ENCODE measurements at regions of chr7 and their contacts with region 1.

Region 1: GRCh38 chr7:117819558-117819957 is 53.7 kb downstream of the CTTNBP2 start:
- DNase-seq: no peak
- ATAC-seq: no peak
- H3K4me3 ChIP-seq: no peak overlapping the region
- H3K4me3 Mint-ChIP-seq: no peak overlapping the region
- H3K27ac ChIP-seq: no peak overlapping the region
- H3K27ac Mint-ChIP-seq: no peak overlapping the region
- H3K4me1 ChIP-seq: no peaks in the 10 kb centered on the region
- H3K4me1 Mint-ChIP-seq: no peaks in the 10 kb centered on the region
- H3K27me3 ChIP-seq: no peaks in the 10 kb centered on the region
- H3K27me3 Mint-ChIP-seq: no peaks in the 10 kb centered on the region

Region 2: DNA sequence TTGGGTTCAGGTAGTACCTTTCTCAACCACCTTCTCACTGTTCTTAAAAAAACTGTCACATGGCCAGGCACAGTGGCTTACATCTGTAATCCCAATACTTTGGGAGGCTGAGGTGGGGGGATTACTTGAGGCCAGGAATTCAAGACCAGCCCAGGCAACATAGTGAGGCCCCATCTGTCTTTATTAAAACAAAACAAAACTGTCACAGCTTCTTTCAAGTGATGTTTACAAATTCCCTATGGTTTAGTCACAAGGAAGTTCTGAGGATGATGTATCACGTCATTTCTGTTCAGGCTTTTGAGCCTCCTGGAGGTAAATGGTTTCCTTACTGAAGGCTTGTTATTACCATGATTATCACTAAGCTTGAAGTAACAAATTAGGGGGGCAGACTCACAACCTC is 153.5 kb before region 1 on chr7:
- CTCF ChIA-PET with region 1: no interaction called
- POLR2A ChIA-PET with region 1: no interaction called
- DNase-seq: no peak
- ATAC-seq: no peak
- H3K4me3 ChIP-seq: no peak overlapping the region
- H3K4me3 Mint-ChIP-seq: no peak overlapping the region
- H3K27ac ChIP-seq: no peak overlapping the region
- H3K27ac Mint-ChIP-seq: no peak overlapping the region
- H3K4me1 ChIP-seq: no peaks in the 10 kb centered on the region
- H3K4me1 Mint-ChIP-seq: no peaks in the 10 kb centered on the region
- H3K27me3 ChIP-seq: no peaks in the 10 kb centered on the region
- H3K27me3 Mint-ChIP-seq: no peaks in the 10 kb centered on the region

Region 3: GRCh38 chr7:117682681-117683385 is 136.7 kb before region 1 on chr7:
- CTCF ChIA-PET with region 1: no interaction called
- POLR2A ChIA-PET with region 1: no interaction called
- DNase-seq: no peak
- ATAC-seq: no peak
- H3K4me3 ChIP-seq: no peak overlapping the region
- H3K4me3 Mint-ChIP-seq: no peak overlapping the region
- H3K27ac ChIP-seq: no peak overlapping the region
- H3K27ac Mint-ChIP-seq: no peak overlapping the region
- H3K4me1 ChIP-seq: no peaks in the 10 kb centered on the region
- H3K4me1 Mint-ChIP-seq: no peaks in the 10 kb centered on the region
- H3K27me3 ChIP-seq: no peaks in the 10 kb centered on the region
- H3K27me3 Mint-ChIP-seq: no peaks in the 10 kb centered on the region

Region 4: GRCh38 chr7:117737926-117738325 is 81.6 kb before region 1 on chr7:
- CTCF ChIA-PET with region 1: no interaction called
- POLR2A ChIA-PET with region 1: no interaction called
- DNase-seq: no peak
- ATAC-seq: no peak
- H3K4me3 ChIP-seq: no peak overlapping the region
- H3K4me3 Mint-ChIP-seq: no peak overlapping the region
- H3K27ac ChIP-seq: no peak overlapping the region
- H3K27ac Mint-ChIP-seq: no peak overlapping the region
- H3K4me1 ChIP-seq: no peaks in the 10 kb centered on the region
- H3K4me1 Mint-ChIP-seq: no peaks in the 10 kb centered on the region
- H3K27me3 ChIP-seq: no peaks in the 10 kb centered on the region
- H3K27me3 Mint-ChIP-seq: peaks cover 0 to 4% of the 10 kb centered on the region in 2 donors

Region 5: DNA sequence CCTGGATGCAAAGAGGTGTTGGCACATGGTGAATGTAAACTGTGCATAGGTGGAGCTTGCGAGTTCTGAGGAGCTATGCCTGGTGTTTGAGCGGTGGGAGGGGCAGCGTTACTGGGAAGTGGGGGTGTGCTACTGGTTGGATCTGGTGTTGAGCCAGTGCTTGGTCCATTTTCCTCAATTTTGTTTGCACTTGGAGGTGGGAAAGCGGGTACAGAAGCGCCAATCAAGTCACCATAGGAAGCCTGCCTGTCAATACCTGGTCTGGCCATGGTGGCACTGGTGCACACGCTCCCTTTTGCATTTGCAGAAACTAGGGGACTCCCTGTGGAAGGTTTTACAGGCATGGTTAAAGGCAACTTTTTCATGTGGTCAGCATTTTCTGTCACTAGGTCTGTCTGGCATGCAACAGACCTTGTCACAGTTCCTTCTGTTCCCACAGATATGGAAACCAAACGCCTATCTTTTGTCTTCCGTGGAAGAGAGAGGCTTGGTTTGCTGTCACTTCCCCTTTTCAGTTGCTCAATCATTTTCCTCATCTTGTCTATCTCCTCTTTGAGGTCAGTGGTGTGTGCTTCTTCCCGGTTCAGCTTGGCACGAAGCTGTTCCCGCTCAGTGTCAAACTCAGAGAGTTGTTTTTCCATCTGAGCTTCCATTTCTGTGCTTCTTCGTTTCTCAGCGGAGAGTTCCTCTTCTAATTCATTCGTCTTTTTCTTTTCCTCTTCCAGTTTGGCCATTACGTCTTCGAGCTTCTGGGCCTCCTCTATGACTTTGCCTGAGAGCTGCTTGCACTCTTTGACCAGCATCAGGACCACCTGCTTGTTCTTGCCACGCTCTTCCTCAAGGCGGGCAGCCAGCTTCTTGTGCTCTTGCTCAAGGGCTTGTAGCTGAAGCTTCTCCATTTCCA is 27.4 kb before region 1 on chr7:
- CTCF ChIA-PET with region 1: no interaction called
- POLR2A ChIA-PET with region 1: interaction called in 1 of 2 experiments, 11 read pairs
- DNase-seq: no peak
- ATAC-seq: peak in 1 of 4 experiments; percentile 13
- H3K4me3 ChIP-seq: no peak overlapping the region
- H3K4me3 Mint-ChIP-seq: no peak overlapping the region
- H3K27ac ChIP-seq: no peak overlapping the region
- H3K27ac Mint-ChIP-seq: no peak overlapping the region
- H3K4me1 ChIP-seq: no peaks in the 10 kb centered on the region
- H3K4me1 Mint-ChIP-seq: peaks cover 0 to 5% (median 0%) of the 10 kb centered on the region in 3 donors
- H3K27me3 ChIP-seq: no peaks in the 10 kb centered on the region
- H3K27me3 Mint-ChIP-seq: peaks cover 4 to 8% of the 10 kb centered on the region in 2 donors

Region 6: GRCh38 chr7:117858731-117859130 is 39.2 kb after region 1 on chr7:
- CTCF ChIA-PET with region 1: no interaction called
- POLR2A ChIA-PET with region 1: no interaction called
- DNase-seq: no peak
- ATAC-seq: no peak
- H3K4me3 ChIP-seq: no peak overlapping the region
- H3K4me3 Mint-ChIP-seq: no peak overlapping the region
- H3K27ac ChIP-seq: no peak overlapping the region
- H3K27ac Mint-ChIP-seq: no peak overlapping the region
- H3K4me1 ChIP-seq: no peaks in the 10 kb centered on the region
- H3K4me1 Mint-ChIP-seq: no peaks in the 10 kb centered on the region
- H3K27me3 ChIP-seq: no peaks in the 10 kb centered on the region
- H3K27me3 Mint-ChIP-seq: peaks cover 3 to 7% of the 10 kb centered on the region in 2 donors

Measured in T-cell (primary cell).